ENCODE measurements at regions of chr1 and their contacts with region 1.

Region 1: DNA sequence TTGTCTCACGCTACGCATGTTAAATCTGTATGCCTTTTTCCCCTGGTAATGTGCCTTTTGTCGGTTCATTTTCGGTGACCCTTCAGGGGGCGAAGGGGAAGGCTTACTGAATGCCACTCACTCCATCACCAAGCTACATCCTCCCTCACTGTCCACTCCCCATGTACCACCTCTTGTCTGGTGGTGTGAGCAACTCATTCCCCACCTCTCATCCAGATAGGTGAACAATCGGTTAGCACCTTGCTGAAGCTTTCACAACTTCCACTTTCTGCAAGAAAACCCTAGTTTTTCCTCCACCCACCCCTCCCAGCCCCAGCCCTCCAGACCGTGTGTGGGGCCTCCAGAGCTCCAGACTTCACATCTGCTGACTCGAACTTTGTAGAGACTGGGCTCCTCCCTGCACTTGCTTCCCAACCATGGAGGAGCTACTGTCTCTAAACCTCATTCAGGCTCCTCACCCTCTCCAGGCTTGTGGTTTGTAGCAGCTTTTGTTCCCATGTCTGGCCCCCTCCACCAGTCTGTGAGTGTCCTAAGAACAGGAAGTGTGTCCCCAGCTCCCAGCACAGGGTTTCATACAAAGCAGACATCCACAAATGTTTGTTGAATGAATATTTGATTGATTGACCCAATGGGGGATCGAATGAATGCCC is 48.4 kb upstream of the RUNX3 start:
- DNase-seq: no peak
- H3K4me3 Mint-ChIP-seq: no peak overlapping the region
- H3K27ac Mint-ChIP-seq: no peak overlapping the region
- H3K4me1 Mint-ChIP-seq: peaks cover 78% of the 10 kb centered on the region
- H3K27me3 Mint-ChIP-seq: no peaks in the 10 kb centered on the region

Region 2: DNA sequence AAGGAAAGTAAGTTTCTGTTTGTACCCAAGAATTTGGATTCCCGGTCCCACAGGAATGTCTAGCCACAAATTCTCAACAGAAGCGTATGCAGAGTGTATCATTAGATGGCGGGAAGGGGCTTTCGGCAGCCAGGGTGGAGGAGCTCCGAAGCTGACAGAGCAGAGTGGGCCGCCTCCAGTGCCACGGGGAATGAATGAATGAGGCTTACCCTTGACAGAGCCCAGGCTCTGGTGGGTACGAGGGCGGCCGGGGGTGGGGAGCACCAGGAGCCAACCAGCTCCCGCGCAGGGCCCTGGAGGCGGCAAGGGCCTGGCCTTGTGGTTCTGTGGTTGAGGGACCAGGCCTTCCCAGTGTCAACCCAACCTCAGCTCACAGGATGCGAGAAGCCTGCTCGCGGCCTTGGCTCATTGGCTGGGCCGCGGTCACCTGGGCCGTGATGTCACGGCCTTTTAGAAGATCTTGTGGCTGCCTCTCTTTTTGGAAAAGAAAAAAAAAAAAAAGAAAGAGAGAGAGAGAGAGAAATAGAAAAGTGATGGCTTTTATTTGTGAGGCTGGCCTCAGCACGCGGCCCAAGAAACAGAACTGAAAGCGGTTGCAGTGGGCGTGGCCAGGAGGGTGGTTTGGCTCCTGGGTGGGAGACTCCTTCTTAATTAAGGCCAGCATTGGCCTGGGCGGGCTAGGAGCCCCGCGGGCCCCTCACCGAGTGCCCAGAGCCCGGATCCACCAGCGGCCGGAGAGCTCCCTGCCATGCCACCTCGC is 13.5 kb before region 1 on chr1:
- CTCF ChIA-PET with region 1: interaction called, 11 read pairs
- POLR2A ChIA-PET with region 1: interaction called, 12 read pairs
- DNase-seq: peak; percentile 98
- H3K4me3 Mint-ChIP-seq: peak overlapping the region; percentile 92
- H3K27ac Mint-ChIP-seq: peak overlapping the region; percentile 92
- H3K4me1 Mint-ChIP-seq: peaks cover 65% of the 10 kb centered on the region
- H3K27me3 Mint-ChIP-seq: no peaks in the 10 kb centered on the region

Region 3: GRCh38 chr1:24996983-24997893 is 18.7 kb after region 1 on chr1:
- CTCF ChIA-PET with region 1: interaction called, 57 read pairs
- POLR2A ChIA-PET with region 1: no interaction called
- DNase-seq: peak; percentile 39
- H3K4me3 Mint-ChIP-seq: no peak overlapping the region
- H3K27ac Mint-ChIP-seq: peak overlapping the region; percentile 80
- H3K4me1 Mint-ChIP-seq: peaks cover 89% of the 10 kb centered on the region
- H3K27me3 Mint-ChIP-seq: no peaks in the 10 kb centered on the region

Measured in activated CD4-positive, alpha-beta T cell treated with anti-CD3 and anti-CD28 coated beads, Interleukin-2, amount 10 ng/mL, durations not matched to agents 7 days and 5 days (primary cell).